Caco-2 (cell line): ENCODE measurements at regions of chr10 and their contacts with region 1.

Region 1: DNA sequence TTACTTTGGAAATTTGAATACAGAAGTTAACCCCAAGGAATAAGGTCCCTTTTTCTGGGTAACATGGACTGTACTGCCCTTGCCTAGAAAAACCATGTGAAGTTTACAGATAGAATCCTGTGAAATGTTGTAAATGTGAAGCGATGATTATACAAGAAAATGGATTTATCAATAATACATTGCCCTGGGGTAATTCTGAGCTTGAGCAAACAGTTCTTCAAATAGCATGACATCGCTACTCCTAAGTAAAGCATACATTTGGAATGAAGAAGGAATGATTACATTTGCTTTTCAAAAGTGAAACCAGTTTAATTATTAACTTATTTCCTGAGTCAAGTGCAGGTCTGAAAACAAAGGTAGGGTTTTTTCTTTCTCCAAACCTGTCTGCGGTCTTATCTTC is 43.3 kb upstream of the FZD8 start:
- DNase-seq: peak in 1 of 2 experiments; percentile 61
- H3K4me3 ChIP-seq: no peak overlapping the region
- H3K4me3 Mint-ChIP-seq: peak overlapping the region; percentile 15
- H3K27ac Mint-ChIP-seq: no peak overlapping the region
- H3K4me1 ChIP-seq: peaks cover 20% of the 10 kb centered on the region
- H3K4me1 Mint-ChIP-seq: peaks cover 7% of the 10 kb centered on the region
- H3K27me3 ChIP-seq: no peaks in the 10 kb centered on the region
- H3K27me3 Mint-ChIP-seq: peaks cover 3% of the 10 kb centered on the region
- CTCF ChIP-seq: no peak

Region 2: GRCh38 chr10:35642027-35642792 is 43.2 kb before region 1 on chr10 and contains the start of gene FZD8:
- CTCF ChIA-PET with region 1: interaction called, 5 read pairs
- POLR2A ChIA-PET with region 1: no interaction called
- intact Hi-C with region 1: loop called (anchors 1 kb)
- DNase-seq: peak; percentile 94 to 96
- H3K4me3 ChIP-seq: peak within 1 kb of the TSS; percentile 76
- H3K4me3 Mint-ChIP-seq: peak within 1 kb of the TSS; percentile 89
- H3K27ac Mint-ChIP-seq: no peak within 1 kb of the TSS
- H3K4me1 ChIP-seq: peaks cover 3% of the 10 kb centered on the region; the same call in 1 of the 2 replicates
- H3K4me1 Mint-ChIP-seq: no peaks in the 10 kb centered on the region
- H3K27me3 ChIP-seq: peaks cover 4% of the 10 kb centered on the region
- H3K27me3 Mint-ChIP-seq: peaks cover 17% of the 10 kb centered on the region
- CTCF ChIP-seq: peak in 1 of 2 experiments; percentile 37
- total RNA-seq, gene FZD8: 2.4 and 3.4 TPM in 2 replicates

Region 3: DNA sequence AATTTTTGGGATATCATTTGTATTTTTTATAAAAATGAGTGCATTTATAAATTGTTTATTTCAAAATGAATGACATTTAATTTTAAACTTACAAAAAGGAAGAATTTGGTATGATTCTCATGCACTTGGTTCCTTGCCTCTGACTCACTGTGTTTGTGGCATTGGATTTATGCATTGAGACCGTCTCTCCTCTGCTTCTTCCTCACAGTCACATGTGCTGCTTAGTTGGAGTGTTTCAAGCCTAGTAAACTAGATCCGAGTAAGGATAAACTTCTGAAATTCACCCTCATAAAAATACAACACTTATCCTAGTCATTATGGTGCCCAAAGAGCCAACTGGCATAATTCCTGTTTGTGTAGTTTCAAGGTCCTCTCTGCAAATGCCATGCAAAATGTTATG is 24.2 kb before region 1 on chr10:
- CTCF ChIA-PET with region 1: no interaction called
- POLR2A ChIA-PET with region 1: no interaction called
- intact Hi-C with region 1: no loop called
- DNase-seq: no peak
- H3K4me3 ChIP-seq: no peak overlapping the region
- H3K4me3 Mint-ChIP-seq: no peak overlapping the region
- H3K27ac Mint-ChIP-seq: no peak overlapping the region
- H3K4me1 ChIP-seq: no peaks in the 10 kb centered on the region
- H3K4me1 Mint-ChIP-seq: no peaks in the 10 kb centered on the region
- H3K27me3 ChIP-seq: no peaks in the 10 kb centered on the region
- H3K27me3 Mint-ChIP-seq: peaks cover 22% of the 10 kb centered on the region
- CTCF ChIP-seq: no peak

Region 4: GRCh38 chr10:35716776-35717175 is 31.4 kb after region 1 on chr10:
- CTCF ChIA-PET with region 1: no interaction called
- POLR2A ChIA-PET with region 1: no interaction called
- intact Hi-C with region 1: loop called (anchors 1 kb)
- DNase-seq: no peak
- H3K4me3 ChIP-seq: no peak overlapping the region
- H3K4me3 Mint-ChIP-seq: no peak overlapping the region
- H3K27ac Mint-ChIP-seq: no peak overlapping the region
- H3K4me1 ChIP-seq: peaks cover 6% of the 10 kb centered on the region; the same call in 1 of the 2 replicates
- H3K4me1 Mint-ChIP-seq: peaks cover 7% of the 10 kb centered on the region
- H3K27me3 ChIP-seq: no peaks in the 10 kb centered on the region
- H3K27me3 Mint-ChIP-seq: no peaks in the 10 kb centered on the region
- CTCF ChIP-seq: no peak

Region 5: GRCh38 chr10:35765066-35765527 is 79.7 kb after region 1 on chr10:
- CTCF ChIA-PET with region 1: no interaction called
- POLR2A ChIA-PET with region 1: no interaction called
- intact Hi-C with region 1: loop called (anchors 1 kb)
- DNase-seq: peak; percentile 66 to 78
- H3K4me3 ChIP-seq: peak overlapping the region; percentile 44
- H3K4me3 Mint-ChIP-seq: peak overlapping the region; percentile 90
- H3K27ac Mint-ChIP-seq: peak overlapping the region; percentile 94
- H3K4me1 ChIP-seq: peaks cover 44% of the 10 kb centered on the region
- H3K4me1 Mint-ChIP-seq: peaks cover 26% of the 10 kb centered on the region
- H3K27me3 ChIP-seq: no peaks in the 10 kb centered on the region
- H3K27me3 Mint-ChIP-seq: no peaks in the 10 kb centered on the region
- CTCF ChIP-seq: peak in 1 of 2 experiments; percentile 13

Region 6: DNA sequence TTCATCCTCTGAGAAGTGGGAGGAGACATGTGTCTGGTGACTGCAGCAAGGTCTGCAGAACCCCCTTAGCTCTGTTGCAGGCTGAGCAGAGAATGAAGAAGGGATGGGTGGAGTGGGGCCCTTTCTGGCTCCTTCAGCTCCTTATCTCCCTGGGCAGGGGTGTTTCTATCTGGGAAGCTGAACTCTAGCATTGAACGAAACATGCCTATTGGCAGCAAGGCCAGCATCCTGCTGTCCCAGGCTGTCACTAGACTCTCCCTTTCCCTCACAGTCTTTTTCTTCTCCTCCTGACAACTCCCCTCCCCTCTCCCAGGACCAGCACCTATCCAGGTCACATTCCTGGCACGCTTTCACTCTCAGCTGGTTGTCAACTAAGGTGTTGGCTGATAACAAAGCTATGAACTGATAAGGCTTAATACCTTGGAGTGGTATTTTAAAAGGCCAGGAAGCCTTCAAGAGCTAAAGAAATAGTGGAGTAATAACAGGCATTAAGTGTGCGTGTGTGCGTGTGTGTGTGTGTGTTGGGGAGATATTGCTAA is 85.5 kb after region 1 on chr10:
- CTCF ChIA-PET with region 1: no interaction called
- POLR2A ChIA-PET with region 1: no interaction called
- intact Hi-C with region 1: loop called (anchors 1 kb)
- DNase-seq: peak; percentile 89 to 94
- H3K4me3 ChIP-seq: no peak overlapping the region
- H3K4me3 Mint-ChIP-seq: peak overlapping the region; percentile 22
- H3K27ac Mint-ChIP-seq: no peak overlapping the region
- H3K4me1 ChIP-seq: peaks cover 68% of the 10 kb centered on the region
- H3K4me1 Mint-ChIP-seq: peaks cover 35% of the 10 kb centered on the region
- H3K27me3 ChIP-seq: no peaks in the 10 kb centered on the region
- H3K27me3 Mint-ChIP-seq: no peaks in the 10 kb centered on the region
- CTCF ChIP-seq: no peak

Region 7: DNA sequence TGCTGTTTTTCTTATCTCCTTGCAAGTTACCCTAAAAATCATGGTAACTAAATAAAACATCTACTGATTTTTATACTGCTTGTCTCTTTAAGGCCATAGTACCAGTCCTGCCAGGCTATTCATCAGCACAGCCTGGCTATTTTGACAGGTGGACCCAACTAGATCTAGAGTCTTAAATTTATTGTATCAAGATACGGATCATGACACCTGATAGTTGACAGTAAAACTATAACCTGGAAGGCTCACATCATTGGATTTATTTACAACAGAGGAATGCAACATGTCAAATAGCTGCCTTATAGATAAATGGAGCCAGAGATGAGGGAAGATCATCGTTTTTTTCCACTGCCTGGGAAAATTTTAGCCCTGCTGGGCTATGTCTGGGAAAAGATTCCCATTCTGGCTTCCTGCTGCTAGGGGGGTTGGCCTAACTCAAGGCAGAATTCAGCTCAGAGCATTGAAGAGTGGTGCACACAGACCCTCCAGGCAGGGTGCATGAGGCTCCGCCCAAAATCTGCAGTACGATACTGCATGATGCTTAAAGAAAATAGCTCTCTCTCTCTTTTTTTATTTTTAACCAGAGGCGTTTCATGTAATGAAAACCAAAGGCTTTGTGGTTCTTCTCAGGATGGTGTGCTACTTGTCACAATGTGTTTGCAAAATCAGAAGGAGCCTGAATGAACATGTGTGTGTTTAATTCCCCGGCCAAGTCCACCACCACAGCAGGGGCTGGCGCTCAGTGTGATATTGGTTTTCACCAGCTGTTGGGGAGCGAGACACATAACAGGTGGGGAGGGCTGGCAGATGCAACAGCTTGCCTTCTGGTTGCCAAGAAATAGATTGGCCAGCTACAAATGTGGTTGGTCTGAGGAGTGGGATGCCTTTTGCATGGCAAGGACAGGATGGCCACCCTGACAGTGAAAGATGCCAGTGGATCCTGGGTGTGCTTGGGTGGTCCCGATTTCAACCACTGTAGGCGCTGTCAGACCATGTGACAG is 248.9 kb after region 1 on chr10:
- CTCF ChIA-PET with region 1: no interaction called
- POLR2A ChIA-PET with region 1: no interaction called
- intact Hi-C with region 1: loop called (anchors 2 kb)
- DNase-seq: no peak
- H3K4me3 ChIP-seq: no peak overlapping the region
- H3K4me3 Mint-ChIP-seq: no peak overlapping the region
- H3K27ac Mint-ChIP-seq: no peak overlapping the region
- H3K4me1 ChIP-seq: peaks cover 17% of the 10 kb centered on the region
- H3K4me1 Mint-ChIP-seq: peaks cover 16% of the 10 kb centered on the region
- H3K27me3 ChIP-seq: no peaks in the 10 kb centered on the region
- H3K27me3 Mint-ChIP-seq: peaks cover 22% of the 10 kb centered on the region
- CTCF ChIP-seq: no peak